Activated CD4-positive, alpha-beta memory T cell treated with anti-CD3 and anti-CD28 coated beads for 36 hours (primary cell): ENCODE measurements at regions of chr2 and their contacts with region 1.

Region 1: DNA sequence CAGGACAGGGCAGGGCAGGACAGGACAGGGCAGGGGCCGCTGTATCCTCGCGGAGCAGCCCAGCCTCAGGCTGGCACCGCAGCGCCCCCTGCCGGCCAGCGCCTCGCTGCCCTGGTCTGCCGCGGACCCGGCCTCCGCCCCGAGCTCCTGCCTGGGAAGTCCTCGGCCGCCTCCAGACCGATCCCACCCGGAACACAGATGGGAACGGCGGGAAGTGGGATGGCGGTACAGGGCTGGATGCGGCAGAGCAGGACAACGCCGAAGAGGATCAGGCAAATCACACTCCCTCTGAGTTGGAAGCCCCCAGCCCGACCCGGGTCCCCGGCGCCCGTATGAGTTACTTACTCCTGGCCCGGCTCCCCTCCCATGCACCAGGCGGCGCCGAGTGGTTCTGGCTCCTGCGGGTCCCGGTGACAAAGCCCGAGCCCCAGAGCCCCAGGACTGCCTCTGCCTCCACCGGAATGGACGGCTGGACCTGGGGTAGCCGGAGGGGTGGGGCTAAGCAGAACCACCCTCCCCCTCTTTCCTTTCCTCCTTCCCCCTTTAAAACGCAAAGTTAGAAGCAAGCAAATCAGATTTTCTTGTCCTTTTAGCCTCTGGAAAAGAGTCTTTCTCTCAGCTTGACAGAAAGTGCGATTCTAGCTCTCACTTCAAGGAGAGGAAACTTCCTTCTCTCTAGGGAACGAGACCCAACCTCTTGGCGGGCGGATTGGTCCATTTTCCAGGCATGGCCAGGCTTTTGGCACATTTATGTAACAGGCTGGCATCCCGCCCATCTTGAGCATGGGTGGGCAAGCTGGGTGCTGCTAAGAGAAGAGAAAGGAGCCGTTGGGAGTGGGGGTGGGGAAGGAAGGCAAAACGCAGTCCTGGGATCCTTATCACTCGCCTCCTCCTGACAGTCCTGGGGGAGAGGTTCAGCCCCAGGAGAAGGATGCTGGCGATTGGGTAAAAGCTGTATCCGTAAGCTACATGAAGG is at the start of gene TP53I3:
- DNase-seq: peak; percentile 87
- H3K4me3 Mint-ChIP-seq: peak within 1 kb of the TSS; percentile 81
- H3K27ac Mint-ChIP-seq: peak within 1 kb of the TSS; percentile 61
- H3K4me1 Mint-ChIP-seq: peaks cover 14% of the 10 kb centered on the region
- H3K27me3 Mint-ChIP-seq: no peaks in the 10 kb centered on the region
- total RNA-seq, gene TP53I3: 0.90 to 0.94 TPM

Region 2: DNA sequence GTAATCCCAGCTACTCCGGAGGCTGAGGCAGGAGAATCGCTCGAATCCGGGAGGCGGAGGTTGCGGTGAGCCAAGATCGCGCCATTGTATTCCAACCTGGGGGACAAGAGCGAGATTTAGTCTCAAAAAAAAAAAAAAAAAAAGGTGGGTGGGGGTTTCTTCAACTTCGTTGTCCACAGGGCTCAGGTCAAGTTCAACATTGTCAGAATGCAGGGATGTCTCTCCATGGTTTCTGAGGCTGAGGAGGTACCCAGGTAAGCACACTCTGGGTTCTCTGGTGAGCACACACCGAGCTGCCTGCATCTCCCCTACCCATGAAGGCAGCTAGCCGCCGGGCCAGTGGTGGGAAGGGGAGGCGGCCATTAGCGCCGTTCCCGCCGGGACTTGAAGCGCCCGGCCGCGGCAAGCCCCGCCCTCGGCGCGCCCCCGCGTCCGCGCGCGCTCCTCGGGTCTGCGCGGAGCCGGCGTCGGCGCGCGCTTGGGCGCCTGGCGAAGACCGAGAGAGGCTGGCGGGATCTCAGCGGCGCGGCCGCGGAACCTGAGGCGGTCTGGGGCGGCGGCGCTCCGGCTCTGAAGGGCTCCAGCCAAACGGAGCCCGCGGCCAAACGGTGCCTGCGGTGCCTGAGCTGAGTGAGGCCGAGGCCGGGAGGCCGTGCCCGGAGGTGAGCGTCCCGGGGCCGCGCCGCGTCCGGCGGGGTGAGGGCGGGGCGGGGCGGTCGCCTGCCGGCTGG is 144.5 kb before region 1 on chr2 and contains the start of gene UBXN2A:
- CTCF ChIA-PET with region 1: interaction called, 16 read pairs
- POLR2A ChIA-PET with region 1: interaction called, 3 read pairs
- intact Hi-C with region 1: no loop called
- DNase-seq: peak; percentile 79
- H3K4me3 Mint-ChIP-seq: peak within 1 kb of the TSS; percentile 86
- H3K27ac Mint-ChIP-seq: peak within 1 kb of the TSS; percentile 82
- H3K4me1 Mint-ChIP-seq: peaks cover 20% of the 10 kb centered on the region
- H3K27me3 Mint-ChIP-seq: peaks cover 5% of the 10 kb centered on the region
- total RNA-seq, gene UBXN2A: 11.8 to 12.2 TPM

Region 3: DNA sequence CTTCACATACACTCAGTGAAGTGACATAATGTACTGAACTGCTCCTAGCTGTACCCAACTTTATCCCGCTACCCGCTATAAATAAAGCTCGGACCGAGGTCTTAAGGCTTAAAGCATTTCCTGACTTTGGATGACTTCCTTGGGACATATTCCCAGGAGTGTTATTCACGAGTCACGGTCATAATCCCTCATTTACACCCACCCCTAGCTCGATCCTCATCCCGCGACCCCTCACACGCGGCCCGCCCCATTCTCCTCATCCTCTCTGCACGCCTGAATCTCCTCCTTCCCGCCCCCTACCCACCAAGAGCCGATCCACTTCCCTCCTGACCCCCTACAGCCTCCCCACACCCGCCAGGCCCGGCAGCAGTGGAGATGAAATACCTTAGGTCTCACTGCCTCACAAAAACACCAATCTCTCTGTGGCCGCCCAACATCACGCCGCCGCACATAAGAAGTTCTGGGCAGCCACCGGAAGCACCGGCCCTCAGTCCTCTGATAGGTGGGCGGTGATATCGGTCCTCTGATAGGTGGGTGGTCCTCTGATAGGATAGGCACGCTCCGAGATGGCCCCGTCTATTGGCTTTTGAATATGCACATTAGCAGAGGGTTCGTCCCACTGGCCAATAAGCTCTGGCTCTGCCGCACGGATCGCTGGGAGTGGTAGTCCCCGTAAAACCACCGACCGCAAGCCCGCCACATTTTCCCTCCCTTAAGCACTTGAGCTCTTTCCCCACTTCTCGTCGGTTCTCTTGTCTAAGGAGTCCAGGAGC is 37.6 kb before region 1 on chr2 and contains the start of gene WDCP:
- CTCF ChIA-PET with region 1: interaction called, 19 read pairs
- POLR2A ChIA-PET with region 1: interaction called, 7 read pairs
- intact Hi-C with region 1: loop called (anchors 2 kb)
- DNase-seq: peak; percentile 97
- H3K4me3 Mint-ChIP-seq: peak within 1 kb of the TSS; percentile 95
- H3K27ac Mint-ChIP-seq: peak within 1 kb of the TSS; percentile 74
- H3K4me1 Mint-ChIP-seq: peaks cover 21% of the 10 kb centered on the region
- H3K27me3 Mint-ChIP-seq: peaks cover 3% of the 10 kb centered on the region
- total RNA-seq, gene WDCP: 18.4 to 21.2 TPM

Region 4: DNA sequence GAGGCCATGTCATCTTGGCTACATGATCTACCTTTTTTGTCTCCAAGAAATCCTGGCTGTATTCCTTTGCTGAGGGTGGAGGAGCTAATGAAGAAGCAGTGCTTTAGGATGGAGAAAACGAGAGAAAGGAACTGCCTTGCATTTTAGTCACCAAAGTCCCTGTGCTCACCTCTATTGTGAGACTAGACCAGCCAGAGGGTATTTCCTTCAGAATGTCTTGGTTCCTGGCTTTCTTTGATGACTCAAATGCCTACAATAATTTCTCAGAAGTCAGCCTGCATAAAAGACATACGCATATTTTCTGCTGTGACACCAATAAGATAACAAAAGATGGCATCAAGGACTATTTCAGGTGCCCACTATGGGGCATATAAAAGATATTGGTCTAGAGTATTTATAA is 19.3 kb before region 1 on chr2:
- CTCF ChIA-PET with region 1: interaction called, 14 read pairs
- POLR2A ChIA-PET with region 1: no interaction called
- intact Hi-C with region 1: no loop called
- DNase-seq: no peak
- H3K4me3 Mint-ChIP-seq: no peak overlapping the region
- H3K27ac Mint-ChIP-seq: peak overlapping the region; percentile 10
- H3K4me1 Mint-ChIP-seq: peaks cover 14% of the 10 kb centered on the region
- H3K27me3 Mint-ChIP-seq: no peaks in the 10 kb centered on the region

Region 5: DNA sequence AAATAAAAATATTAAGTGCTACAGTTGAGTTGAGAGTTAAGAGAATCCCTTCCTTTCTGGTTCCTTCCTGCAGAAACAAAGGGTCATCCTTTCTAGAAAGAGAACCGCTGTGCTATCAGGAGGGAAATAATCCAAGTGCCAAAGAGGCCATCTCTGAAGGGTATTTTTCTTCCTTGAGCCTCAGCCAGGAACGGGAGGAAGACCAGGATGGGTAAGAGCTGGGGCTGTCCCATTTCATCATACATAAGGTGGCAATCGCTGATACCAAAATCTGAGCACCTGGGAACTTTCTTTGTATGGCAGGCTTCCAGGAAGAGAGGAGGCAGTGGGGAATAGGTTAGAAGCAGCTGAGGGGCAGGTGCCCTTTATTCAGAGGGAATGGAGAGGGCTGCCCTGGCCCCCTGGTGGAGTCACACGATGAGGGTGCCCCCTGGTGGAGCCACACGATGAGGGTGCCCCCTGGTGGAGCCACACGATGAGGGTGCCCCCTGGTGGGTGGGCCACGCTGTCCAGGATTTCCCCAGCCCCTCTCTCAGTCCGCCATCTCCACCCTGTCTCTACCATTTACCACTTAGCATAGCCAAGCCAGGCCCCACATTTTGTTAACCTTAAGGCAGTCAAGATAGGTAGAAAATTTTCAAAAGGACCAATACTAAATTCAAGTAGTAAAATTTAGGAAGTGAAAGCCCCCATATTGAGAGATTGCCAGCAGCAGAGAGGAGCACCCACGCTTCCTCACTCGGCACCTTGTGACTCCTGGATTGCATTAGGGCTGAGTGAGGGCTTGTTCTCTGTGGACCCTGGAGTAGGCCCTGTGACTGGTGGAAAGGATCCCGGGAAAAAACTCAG is 79.7 kb after region 1 on chr2:
- CTCF ChIA-PET with region 1: interaction called, 11 read pairs
- POLR2A ChIA-PET with region 1: no interaction called
- intact Hi-C with region 1: no loop called
- DNase-seq: peak; percentile 58
- H3K4me3 Mint-ChIP-seq: no peak overlapping the region
- H3K27ac Mint-ChIP-seq: no peak overlapping the region
- H3K4me1 Mint-ChIP-seq: no peaks in the 10 kb centered on the region
- H3K27me3 Mint-ChIP-seq: no peaks in the 10 kb centered on the region